ENCODE measurements at regions of chr3 and their contacts with region 1.

Region 1: DNA sequence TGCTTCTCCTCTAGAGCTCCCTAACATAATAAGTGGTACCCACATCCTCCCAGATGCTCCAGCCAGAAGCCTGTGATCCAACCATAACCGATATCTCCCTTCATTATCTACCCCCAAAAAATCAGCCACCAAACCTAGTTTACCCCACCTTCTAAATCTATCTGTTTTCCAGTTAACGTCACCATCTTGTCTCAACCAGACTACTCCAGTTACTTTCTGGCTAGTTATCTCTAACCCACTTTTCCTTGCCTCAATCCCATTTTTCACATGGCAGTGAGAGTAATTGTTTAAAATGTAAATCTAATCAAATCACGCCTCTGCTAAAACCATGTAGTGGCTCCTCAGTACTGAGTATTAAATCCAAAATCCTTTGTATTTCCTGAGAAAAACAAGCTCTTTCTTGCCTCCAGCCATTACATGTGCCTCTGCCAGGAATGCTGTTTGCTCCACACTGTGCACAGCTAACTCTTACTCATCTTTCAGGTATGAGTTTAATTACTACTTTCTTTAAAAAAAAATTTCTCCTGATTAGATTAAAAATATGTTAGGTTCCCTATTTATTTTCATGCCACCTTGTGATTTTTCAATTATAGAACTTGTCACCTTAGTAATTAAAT is 15.4 kb downstream of the CCDC54 start:
- DNase-seq: peak; percentile 68
- H3K4me3 Mint-ChIP-seq: no peak overlapping the region
- H3K27ac Mint-ChIP-seq: no peak overlapping the region
- H3K4me1 Mint-ChIP-seq: no peaks in the 10 kb centered on the region
- H3K27me3 Mint-ChIP-seq: no peaks in the 10 kb centered on the region
- CTCF ChIP-seq: no peak

Region 2: GRCh38 chr3:107284612-107285011 is 108.0 kb before region 1 on chr3:
- CTCF ChIA-PET with region 1: interaction called, 3 read pairs
- POLR2A ChIA-PET with region 1: interaction called, 12 read pairs
- intact Hi-C with region 1: no loop called
- DNase-seq: peak; percentile 39
- H3K4me3 Mint-ChIP-seq: no peak overlapping the region
- H3K27ac Mint-ChIP-seq: peak overlapping the region; percentile 96
- H3K4me1 Mint-ChIP-seq: peaks cover 22% of the 10 kb centered on the region
- H3K27me3 Mint-ChIP-seq: no peaks in the 10 kb centered on the region
- CTCF ChIP-seq: no peak

Region 3: GRCh38 chr3:107589454-107589853 is 196.8 kb after region 1 on chr3:
- CTCF ChIA-PET with region 1: no interaction called
- POLR2A ChIA-PET with region 1: no interaction called
- intact Hi-C with region 1: no loop called
- DNase-seq: no peak
- H3K4me3 Mint-ChIP-seq: no peak overlapping the region
- H3K27ac Mint-ChIP-seq: no peak overlapping the region
- H3K4me1 Mint-ChIP-seq: peaks cover 7% of the 10 kb centered on the region
- H3K27me3 Mint-ChIP-seq: no peaks in the 10 kb centered on the region
- CTCF ChIP-seq: no peak

Region 4: DNA sequence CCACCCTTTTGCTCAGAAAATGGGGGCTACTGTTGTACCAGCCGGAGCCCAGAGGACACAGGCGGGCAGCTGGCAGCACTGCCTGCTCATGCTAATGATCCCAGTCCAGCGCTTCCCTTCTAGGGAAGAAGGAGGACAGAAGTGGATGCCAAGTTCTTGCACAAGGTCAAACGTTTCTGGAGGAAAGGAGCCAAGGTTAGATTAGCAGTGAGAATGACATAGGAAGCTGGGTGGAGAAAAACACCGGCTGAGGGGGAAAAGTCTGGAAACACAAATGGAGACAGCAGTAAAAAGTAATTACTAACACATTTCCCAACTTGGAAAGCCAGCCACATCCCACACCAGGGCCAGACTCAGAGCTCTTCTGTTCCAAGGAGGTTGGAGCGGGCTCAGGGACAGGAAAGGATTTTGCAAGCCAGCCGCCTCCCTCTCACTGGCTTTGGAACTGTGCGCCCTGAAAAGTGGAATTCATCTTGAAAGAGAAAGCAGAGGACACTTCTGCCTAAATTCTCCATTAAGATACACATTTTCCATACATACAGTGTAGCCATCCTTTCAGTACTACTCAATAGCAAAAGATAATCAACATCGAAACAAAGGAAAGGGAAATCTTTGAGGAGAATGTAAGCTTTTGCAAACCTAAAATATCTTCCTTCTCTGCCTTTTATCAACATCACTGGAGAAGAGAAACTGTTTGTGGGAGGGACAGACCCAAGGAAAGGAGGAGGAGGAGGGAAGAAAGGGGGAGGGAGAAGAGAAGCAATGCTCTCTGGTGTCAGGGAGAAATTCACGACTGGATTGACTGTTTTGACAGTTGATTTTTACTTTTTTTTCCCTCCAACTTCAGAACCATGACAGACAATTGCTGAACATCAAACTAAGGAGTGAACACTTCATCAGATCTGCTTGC is 564.6 kb after region 1 on chr3:
- CTCF ChIA-PET with region 1: no interaction called
- POLR2A ChIA-PET with region 1: no interaction called
- intact Hi-C with region 1: no loop called
- DNase-seq: peak; percentile 82
- H3K4me3 Mint-ChIP-seq: no peak overlapping the region
- H3K27ac Mint-ChIP-seq: no peak overlapping the region
- H3K4me1 Mint-ChIP-seq: peaks cover 8% of the 10 kb centered on the region
- H3K27me3 Mint-ChIP-seq: no peaks in the 10 kb centered on the region
- CTCF ChIP-seq: no peak

Measured in MCF 10A (cell line).